H1 (cell line): ENCODE measurements at regions of chr7 and their contacts with region 1.

Region 1: DNA sequence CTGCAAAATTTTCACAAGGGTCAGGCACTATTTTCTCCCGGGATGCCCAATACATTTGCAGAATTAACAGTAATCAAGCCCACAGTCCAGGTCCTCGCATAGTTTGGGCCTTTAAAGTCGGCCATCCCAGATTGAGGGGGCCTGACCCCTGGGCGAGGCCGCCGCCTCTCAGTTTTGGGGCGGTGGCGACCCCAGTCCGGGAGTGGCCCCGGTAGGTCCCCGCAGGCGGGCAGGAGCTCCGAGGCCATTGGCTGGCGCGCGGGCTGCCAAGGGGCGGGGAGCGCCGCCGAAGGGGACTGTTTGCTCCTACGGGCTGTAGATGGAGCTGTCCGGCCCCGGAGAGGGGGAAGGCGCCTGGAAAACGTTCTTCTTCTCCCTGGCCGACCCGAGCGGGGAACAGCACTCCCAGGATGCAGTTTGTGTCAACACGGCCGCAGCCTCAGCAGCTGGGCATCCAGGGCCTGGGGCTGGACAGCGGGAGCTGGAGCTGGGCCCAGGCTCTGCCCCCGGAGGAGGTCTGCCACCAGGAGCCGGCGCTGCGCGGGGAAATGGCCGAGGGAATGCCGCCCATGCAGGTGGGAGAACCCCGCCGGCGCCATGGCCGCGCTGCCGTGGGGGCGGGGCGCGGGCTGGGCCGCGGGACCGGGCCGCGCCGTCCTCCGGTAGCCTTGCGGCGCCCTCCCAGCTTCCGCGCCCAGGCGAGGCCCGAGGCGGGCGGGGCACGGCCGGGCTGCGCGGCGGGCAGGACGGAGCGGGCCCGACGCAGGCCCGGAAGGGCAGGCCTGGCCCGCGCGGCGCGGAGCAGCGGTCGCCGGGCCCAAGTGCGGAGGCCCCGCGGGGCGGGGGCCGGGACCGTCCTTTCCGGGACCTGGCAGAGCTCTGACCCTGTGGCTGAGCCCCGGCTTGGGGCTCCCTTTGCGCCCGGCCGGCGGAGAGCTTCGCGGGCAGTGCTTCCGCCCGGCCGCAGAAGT is at the start of gene ZNF282:
- DNase-seq: peak; percentile 75 to 91
- H3K4me3 ChIP-seq: peak within 1 kb of the TSS; percentile 78 to 94 (median 88)
- H3K27ac ChIP-seq: peak within 1 kb of the TSS; percentile 89
- H3K4me1 ChIP-seq: peaks cover 0 to 5% (median 4%) of the 10 kb centered on the region in 4 experiments; a peak in 5 of 7 replicates
- H3K27me3 ChIP-seq: no peaks in the 10 kb centered on the region
- CTCF ChIP-seq: peak; percentile 64 to 67 (median 67)
- EP300 ChIP-seq: no peak
- POLR2A ChIP-seq: peak; percentile 79 to 87
- RAD21 ChIP-seq: peak; percentile 48 to 50; a peak in 3 of 4 replicates
- total RNA-seq, gene ZNF282: 35.7 and 36.3 TPM in 2 replicates

Region 2: DNA sequence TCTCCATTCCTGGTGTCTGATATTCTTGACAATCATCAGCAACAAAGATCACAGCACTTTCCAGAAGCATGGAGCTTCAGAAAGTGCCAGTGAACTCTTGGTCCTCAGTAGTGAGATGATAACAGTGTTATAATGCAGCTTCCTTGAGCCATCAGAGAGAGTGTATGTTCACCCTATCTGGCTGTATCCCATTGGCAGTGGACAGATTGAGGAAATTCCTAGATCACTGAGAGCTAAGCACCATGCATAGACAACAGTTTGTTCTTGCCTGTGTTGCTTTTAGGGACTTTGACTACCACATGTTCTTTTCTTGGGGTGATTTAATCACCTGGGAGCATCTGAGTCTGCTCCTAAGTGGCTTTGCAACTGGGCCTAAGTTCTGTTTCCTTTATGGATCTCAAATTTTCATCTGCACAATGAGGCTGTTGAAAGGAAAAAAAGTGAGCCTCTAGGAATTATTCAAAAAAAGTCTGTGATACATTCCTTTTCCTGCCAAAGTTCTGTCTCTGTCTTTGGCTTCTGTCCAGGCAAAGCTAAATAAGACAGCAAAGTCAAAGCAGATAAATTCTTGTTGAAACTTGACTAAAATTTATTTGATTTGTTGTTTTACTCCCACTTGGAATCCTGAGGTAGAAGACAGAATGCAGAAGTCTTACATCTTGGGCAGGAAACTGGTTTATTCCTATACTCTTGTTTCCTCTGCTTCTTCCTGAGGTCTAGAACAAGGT is 14.6 kb before region 1 on chr7:
- CTCF ChIA-PET with region 1: interaction called, 6 read pairs
- POLR2A ChIA-PET with region 1: interaction called, 82 read pairs
- DNase-seq: no peak
- H3K4me3 ChIP-seq: no peak overlapping the region
- H3K27ac ChIP-seq: no peak overlapping the region
- H3K4me1 ChIP-seq: no peaks in the 10 kb centered on the region
- H3K27me3 ChIP-seq: no peaks in the 10 kb centered on the region
- CTCF ChIP-seq: no peak
- EP300 ChIP-seq: no peak
- POLR2A ChIP-seq: 0 out of 3 replicates have a peak, but pooled peaks of 1 of the 2 experiments have one; percentile 18
- RAD21 ChIP-seq: no peak

Region 3: DNA sequence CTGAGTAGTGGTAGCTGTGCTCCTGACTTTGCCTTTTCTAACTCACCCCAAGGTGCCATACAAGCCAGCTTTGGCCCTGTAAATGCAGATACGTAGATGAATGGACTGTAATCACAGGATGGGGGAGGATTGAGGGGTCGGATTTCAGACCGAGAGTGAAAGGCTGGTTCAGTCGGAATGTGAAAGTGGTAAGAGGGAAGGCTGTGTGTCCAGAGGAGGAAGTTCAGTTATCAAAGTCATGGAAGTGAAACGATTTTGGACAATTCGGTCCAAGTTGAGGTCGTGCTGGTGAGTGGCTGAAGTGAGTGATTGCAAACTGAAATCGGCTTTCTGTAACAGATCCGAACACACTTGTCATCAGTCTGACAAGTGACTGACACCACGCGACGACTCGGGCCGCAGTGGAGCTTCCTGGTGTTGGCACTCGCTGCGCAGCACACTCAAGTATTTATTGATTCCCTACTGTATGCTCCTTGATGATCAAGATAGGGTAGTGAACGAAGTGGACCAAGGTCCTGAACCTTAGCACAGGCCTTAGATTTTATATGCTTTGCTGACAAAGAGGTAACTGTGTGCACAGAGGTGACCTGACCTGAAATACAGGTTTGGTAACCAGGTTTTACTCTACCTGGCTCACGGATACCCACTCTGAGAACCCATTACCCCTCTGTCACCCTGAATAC is 10.4 kb after region 1 on chr7:
- CTCF ChIA-PET with region 1: interaction called, 9 read pairs
- POLR2A ChIA-PET with region 1: interaction called, 16 read pairs
- DNase-seq: no peak
- H3K4me3 ChIP-seq: no peak overlapping the region
- H3K27ac ChIP-seq: no peak overlapping the region
- H3K4me1 ChIP-seq: peaks cover 0 to 9% (median 2%) of the 10 kb centered on the region in 4 experiments; a peak in 5 of 7 replicates
- H3K27me3 ChIP-seq: no peaks in the 10 kb centered on the region
- CTCF ChIP-seq: no peak
- EP300 ChIP-seq: no peak
- POLR2A ChIP-seq: no peak
- RAD21 ChIP-seq: no peak

Region 4: GRCh38 chr7:149229526-149229925 is 34.1 kb after region 1 on chr7:
- CTCF ChIA-PET with region 1: interaction called, 8 read pairs
- POLR2A ChIA-PET with region 1: interaction called, 12 read pairs
- DNase-seq: no peak
- H3K4me3 ChIP-seq: no peak overlapping the region
- H3K27ac ChIP-seq: no peak overlapping the region
- H3K4me1 ChIP-seq: no peaks in the 10 kb centered on the region; a peak in 1 of 7 replicates
- H3K27me3 ChIP-seq: no peaks in the 10 kb centered on the region
- CTCF ChIP-seq: no peak
- EP300 ChIP-seq: no peak
- POLR2A ChIP-seq: peak in 1 of 2 experiments; percentile 11; a peak in 1 of 3 replicates
- RAD21 ChIP-seq: no peak